ENCODE measurements at regions of chr5 and their contacts with region 1.

Region 1: GRCh38 chr5:180831139-180832048 is 28.8 kb upstream of the MGAT1 start:
- DNase-seq: peak; percentile 82 to 94 (median 91)
- ATAC-seq: peak; percentile 94
- H3K4me3 ChIP-seq: peak overlapping the region; percentile 70
- H3K27ac ChIP-seq: peak overlapping the region; percentile 94
- H3K4me1 ChIP-seq: peaks cover 13 to 28% of the 10 kb centered on the region in 2 experiments; a peak in 4 of 5 replicates
- H3K27me3 ChIP-seq: no peaks in the 10 kb centered on the region
- CTCF ChIP-seq: no peak
- EP300 ChIP-seq: no peak
- POLR2A ChIP-seq: peak; percentile 86
- RAD21 ChIP-seq: no peak

Region 2: DNA sequence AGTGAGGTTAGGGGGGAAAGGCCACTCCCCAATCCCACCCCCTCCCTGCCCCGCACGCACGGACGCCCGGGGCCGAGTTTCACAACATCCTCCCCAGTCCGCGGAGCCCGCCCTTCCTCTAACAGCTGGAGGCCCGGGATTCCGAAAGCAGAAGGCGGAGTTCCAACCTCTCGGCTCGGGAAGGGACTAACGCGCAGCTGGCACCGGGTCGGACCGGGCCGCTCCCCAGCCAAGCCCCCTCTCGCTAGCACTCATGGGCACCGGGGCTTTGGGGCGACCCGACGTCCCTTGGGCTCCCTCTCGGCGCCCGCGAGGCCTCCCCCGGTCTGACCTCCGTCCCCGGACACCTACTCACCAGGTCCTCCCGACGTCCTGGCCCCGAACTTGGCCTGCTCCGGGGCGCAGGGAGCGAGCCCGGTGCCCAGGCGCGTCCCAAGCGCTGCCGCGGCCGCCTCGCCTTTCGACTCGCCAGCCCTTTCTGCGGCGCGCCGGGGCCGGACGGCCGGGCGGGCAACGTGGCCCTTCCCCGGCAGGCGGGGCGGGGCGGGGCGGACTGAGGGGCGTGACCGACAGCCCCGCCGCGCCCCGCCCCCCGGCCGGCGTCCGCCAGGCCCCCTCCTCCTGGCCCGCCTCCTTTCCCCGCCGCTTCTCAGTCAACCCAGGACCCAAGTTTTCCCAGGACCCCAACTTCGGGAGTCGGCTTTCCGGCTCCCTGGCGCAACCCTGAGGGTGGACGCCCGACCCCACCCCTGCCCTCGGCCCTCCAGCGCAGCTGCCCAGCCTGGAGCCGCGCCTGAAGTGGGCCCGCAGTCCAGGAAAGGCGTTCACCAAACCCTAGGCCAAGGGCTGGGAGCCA is 28.8 kb before region 1 on chr5 and contains the start of gene MGAT1:
- CTCF ChIA-PET with region 1: interaction called, 4 read pairs
- POLR2A ChIA-PET with region 1: interaction called, 5 read pairs
- in situ Hi-C with region 1: no loop called
- intact Hi-C with region 1: loop called (anchors 2 kb)
- DNase-seq: peak; percentile 85 to 96 (median 94)
- ATAC-seq: peak; percentile 88
- H3K4me3 ChIP-seq: peak within 1 kb of the TSS; percentile 84
- H3K27ac ChIP-seq: peak within 1 kb of the TSS; percentile 89
- H3K4me1 ChIP-seq: peaks cover 61 to 64% of the 10 kb centered on the region in 2 experiments
- H3K27me3 ChIP-seq: no peaks in the 10 kb centered on the region
- CTCF ChIP-seq: no peak
- EP300 ChIP-seq: no peak
- POLR2A ChIP-seq: peak; percentile 81
- RAD21 ChIP-seq: no peak; a peak in 1 of 4 replicates
- polyA plus RNA-seq, gene MGAT1: 3.9 to 5.1 TPM

Region 3: DNA sequence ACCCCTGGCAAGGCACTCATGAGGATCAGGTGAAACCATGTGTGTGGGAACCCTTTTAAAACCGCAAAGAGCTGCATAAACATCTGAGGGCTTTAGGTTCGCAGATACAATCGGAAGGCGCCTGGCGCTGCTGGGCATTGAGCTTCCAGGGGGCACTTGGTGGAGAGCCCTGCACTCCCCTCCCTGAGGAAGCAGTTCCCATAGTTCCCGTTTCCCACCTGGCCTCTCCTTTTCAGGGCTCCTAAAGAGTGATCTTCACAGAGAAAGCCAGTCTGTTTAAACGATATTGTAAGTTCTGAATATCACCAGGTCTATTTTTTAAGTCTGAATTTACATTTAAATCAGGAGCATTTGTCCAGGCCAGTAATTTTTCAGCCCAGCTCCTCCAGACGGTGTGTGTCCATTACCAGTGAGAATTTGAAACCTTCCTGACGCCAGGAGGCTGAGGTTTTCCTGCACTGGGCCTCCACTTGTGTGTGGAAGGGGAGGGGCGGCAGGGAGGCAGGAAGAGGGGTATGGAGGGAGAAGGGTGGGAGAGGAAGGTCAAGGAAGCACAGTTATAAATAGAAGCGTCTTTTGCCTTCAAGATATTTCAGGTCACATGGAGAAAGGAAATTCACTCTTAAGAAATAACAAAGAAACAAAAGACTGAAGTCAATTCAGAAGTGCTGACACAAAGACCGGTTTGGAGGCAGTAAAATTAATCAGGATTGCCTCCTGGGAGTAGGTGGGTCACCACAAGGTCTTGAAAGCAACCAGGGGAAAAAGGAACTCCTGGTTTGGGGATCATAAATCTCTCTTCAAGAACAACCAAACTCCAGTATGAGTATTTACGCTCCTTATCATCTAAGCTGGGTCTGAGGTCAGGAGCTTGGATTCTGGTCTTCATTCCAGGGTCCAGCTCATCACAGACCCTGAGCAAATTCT is 14.5 kb before region 1 on chr5:
- CTCF ChIA-PET with region 1: no interaction called
- POLR2A ChIA-PET with region 1: interaction called, 14 read pairs
- in situ Hi-C with region 1: no loop called
- intact Hi-C with region 1: no loop called
- DNase-seq: no peak
- ATAC-seq: peak; percentile 45
- H3K4me3 ChIP-seq: no peak overlapping the region
- H3K27ac ChIP-seq: peak overlapping the region; percentile 53; the same call in 2 of the 3 replicates
- H3K4me1 ChIP-seq: peaks cover 22 to 42% of the 10 kb centered on the region in 2 experiments
- H3K27me3 ChIP-seq: no peaks in the 10 kb centered on the region
- CTCF ChIP-seq: no peak
- EP300 ChIP-seq: no peak
- POLR2A ChIP-seq: no peak
- RAD21 ChIP-seq: no peak

Region 4: DNA sequence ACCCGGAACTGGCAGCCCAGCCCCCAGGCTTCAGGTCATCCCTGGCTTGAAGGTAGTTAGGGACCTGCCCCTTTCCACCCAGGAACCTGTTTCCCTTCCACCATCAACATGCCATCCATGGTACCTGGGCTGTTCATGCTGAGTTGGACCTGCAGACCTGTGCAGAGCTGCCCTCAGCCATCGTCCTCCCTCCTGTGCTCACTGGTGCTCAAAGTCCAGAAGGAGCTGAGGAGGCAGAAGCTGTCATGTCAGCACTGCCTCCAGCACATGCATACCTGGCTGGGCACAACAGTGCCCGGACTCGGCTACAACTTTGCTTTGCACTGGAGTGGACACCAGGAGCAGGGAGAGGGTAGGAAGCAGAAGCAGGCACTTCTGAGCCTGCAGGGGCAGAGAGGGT is 103.8 kb after region 1 on chr5:
- CTCF ChIA-PET with region 1: no interaction called
- POLR2A ChIA-PET with region 1: no interaction called
- in situ Hi-C with region 1: no loop called
- intact Hi-C with region 1: no loop called
- DNase-seq: peak in 1 of 4 experiments; percentile 0
- ATAC-seq: no peak
- H3K4me3 ChIP-seq: no peak overlapping the region
- H3K27ac ChIP-seq: no peak overlapping the region
- H3K4me1 ChIP-seq: no peaks in the 10 kb centered on the region
- H3K27me3 ChIP-seq: no peaks in the 10 kb centered on the region
- CTCF ChIP-seq: no peak
- EP300 ChIP-seq: no peak
- POLR2A ChIP-seq: no peak
- RAD21 ChIP-seq: no peak